A673 (cell line): ENCODE measurements at regions of chr3 and their contacts with region 1.

Region 1: GRCh38 chr3:138068579-138069174 is 46.7 kb downstream of the DZIP1L start:
- DNase-seq: peak; percentile 85
- H3K4me3 ChIP-seq: no peak overlapping the region
- H3K27ac ChIP-seq: no peak overlapping the region
- H3K4me1 ChIP-seq: no peaks in the 10 kb centered on the region
- H3K27me3 ChIP-seq: no peaks in the 10 kb centered on the region
- CTCF ChIP-seq: peak; percentile 99

Region 2: GRCh38 chr3:138118612-138119422 is 50.1 kb after region 1 on chr3:
- CTCF ChIA-PET with region 1: interaction called, 5 read pairs
- POLR2A ChIA-PET with region 1: no interaction called
- intact Hi-C with region 1: loop called (anchors 1 kb)
- DNase-seq: peak; percentile 69
- H3K4me3 ChIP-seq: no peak overlapping the region
- H3K27ac ChIP-seq: no peak overlapping the region
- H3K4me1 ChIP-seq: peaks cover 5% of the 10 kb centered on the region
- H3K27me3 ChIP-seq: no peaks in the 10 kb centered on the region
- CTCF ChIP-seq: peak; percentile 85

Region 3: GRCh38 chr3:138174421-138175122 is 105.9 kb after region 1 on chr3 and contains the start of gene DBR1:
- CTCF ChIA-PET with region 1: no interaction called
- POLR2A ChIA-PET with region 1: no interaction called
- intact Hi-C with region 1: no loop called
- DNase-seq: peak; percentile 93
- H3K4me3 ChIP-seq: peak within 1 kb of the TSS; percentile 83
- H3K27ac ChIP-seq: peak within 1 kb of the TSS; percentile 87
- H3K4me1 ChIP-seq: peaks cover 13% of the 10 kb centered on the region
- H3K27me3 ChIP-seq: no peaks in the 10 kb centered on the region
- CTCF ChIP-seq: no peak
- total RNA-seq, gene DBR1: 25.6 and 33.1 TPM in 2 replicates

Region 4: DNA sequence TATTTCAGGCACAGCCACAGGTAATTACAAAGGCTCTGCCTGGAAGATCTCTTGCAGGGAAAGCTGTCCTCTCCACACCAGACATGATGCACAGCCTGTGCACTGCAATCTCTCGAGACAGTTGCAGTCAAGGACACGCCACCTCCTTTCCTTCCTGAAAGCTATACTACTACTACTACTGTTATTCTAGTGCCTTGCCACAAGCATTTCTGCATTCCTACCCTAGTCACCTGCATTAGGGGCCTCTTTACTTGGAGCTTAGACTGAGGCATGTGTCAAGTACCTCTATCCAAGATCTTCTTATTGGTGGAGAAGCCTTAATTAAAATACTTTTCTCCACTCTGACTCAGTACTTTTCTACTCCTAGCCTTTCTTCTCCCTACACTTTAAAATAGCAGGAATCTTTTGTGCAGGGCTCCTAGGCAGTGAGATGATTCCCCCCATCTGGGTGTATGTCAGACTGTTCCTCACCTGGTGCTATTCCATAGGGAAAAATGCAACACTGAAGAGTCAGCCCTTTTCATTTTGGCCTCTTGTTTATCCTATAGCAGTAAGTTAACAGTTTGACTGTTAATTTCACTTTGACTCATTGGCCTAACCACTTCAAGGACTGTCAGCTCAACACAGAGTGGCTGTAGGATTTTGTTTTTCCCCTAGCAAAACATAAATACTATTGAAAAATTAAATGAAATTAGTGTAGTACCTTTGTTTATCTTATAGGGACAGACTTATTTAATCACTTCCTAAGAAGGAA is 444.6 kb after region 1 on chr3:
- CTCF ChIA-PET with region 1: no interaction called
- POLR2A ChIA-PET with region 1: no interaction called
- intact Hi-C with region 1: no loop called
- DNase-seq: no peak
- H3K4me3 ChIP-seq: no peak overlapping the region
- H3K27ac ChIP-seq: no peak overlapping the region
- H3K4me1 ChIP-seq: no peaks in the 10 kb centered on the region
- H3K27me3 ChIP-seq: no peaks in the 10 kb centered on the region
- CTCF ChIP-seq: no peak